Caco-2 (cell line): ENCODE measurements at regions of chr2 and their contacts with region 1.

Region 1: GRCh38 chr2:205358351-205358815 is 323.9 kb upstream of the NRP2 start:
- DNase-seq: peak in 1 of 2 experiments; percentile 59
- H3K4me3 ChIP-seq: no peak overlapping the region
- H3K4me3 Mint-ChIP-seq: peak overlapping the region; percentile 41
- H3K27ac Mint-ChIP-seq: peak overlapping the region; percentile 85
- H3K4me1 ChIP-seq: peaks cover 55% of the 10 kb centered on the region
- H3K4me1 Mint-ChIP-seq: peaks cover 50% of the 10 kb centered on the region
- H3K27me3 ChIP-seq: no peaks in the 10 kb centered on the region
- H3K27me3 Mint-ChIP-seq: no peaks in the 10 kb centered on the region
- CTCF ChIP-seq: no peak

Region 2: DNA sequence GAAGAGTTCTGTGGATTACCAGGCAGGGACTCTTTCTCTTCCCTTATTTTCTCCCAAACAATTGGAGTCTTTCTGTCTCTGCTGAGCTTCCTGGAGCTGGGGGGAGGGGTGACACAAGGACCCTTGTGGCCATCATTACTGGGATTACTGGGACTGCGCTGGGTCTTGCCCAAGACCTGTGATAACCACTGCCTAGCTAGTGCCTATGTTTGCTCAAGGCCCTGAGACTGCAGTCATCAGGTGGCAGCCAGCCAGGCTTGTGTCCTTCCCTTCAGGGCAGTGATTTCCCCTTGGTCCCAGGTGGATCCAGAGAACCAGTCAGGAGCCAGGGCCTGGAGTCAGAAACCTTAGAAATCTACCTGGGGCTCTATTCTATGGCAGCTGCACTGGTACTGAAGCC is 457.5 kb before region 1 on chr2:
- CTCF ChIA-PET with region 1: no interaction called
- POLR2A ChIA-PET with region 1: no interaction called
- intact Hi-C with region 1: loop called (anchors 2 kb)
- DNase-seq: peak; percentile 80 to 86
- H3K4me3 ChIP-seq: no peak overlapping the region
- H3K4me3 Mint-ChIP-seq: peak overlapping the region; percentile 48
- H3K27ac Mint-ChIP-seq: peak overlapping the region; percentile 77
- H3K4me1 ChIP-seq: peaks cover 26% of the 10 kb centered on the region
- H3K4me1 Mint-ChIP-seq: peaks cover 44% of the 10 kb centered on the region
- H3K27me3 ChIP-seq: no peaks in the 10 kb centered on the region
- H3K27me3 Mint-ChIP-seq: no peaks in the 10 kb centered on the region
- CTCF ChIP-seq: no peak

Region 3: DNA sequence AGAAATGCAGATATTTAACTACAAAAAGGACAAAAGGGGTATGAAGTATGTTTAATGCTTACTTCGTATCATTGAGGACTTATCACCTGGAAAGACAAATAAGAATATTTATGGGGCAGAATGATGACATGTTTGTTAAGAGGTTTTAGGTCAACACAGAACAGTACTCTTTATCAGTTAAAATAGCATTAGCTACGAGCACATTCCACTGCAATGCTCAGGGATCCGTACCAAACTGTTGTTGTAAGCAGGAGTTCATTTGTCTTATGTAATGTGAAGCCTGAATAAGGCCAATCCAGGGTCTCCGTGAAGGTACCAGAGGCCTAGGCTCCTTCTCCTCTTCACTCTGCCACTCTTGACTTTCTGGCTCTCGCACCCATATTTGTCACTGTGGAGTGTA is 141.8 kb before region 1 on chr2:
- CTCF ChIA-PET with region 1: no interaction called
- POLR2A ChIA-PET with region 1: no interaction called
- intact Hi-C with region 1: loop called (anchors 1 kb)
- DNase-seq: peak; percentile 46 to 56
- H3K4me3 ChIP-seq: no peak overlapping the region
- H3K4me3 Mint-ChIP-seq: no peak overlapping the region
- H3K27ac Mint-ChIP-seq: peak overlapping the region; percentile 78
- H3K4me1 ChIP-seq: peaks cover 57% of the 10 kb centered on the region
- H3K4me1 Mint-ChIP-seq: peaks cover 46% of the 10 kb centered on the region
- H3K27me3 ChIP-seq: no peaks in the 10 kb centered on the region
- H3K27me3 Mint-ChIP-seq: no peaks in the 10 kb centered on the region
- CTCF ChIP-seq: no peak

Region 4: GRCh38 chr2:205270689-205271088 is 87.7 kb before region 1 on chr2:
- CTCF ChIA-PET with region 1: no interaction called
- POLR2A ChIA-PET with region 1: no interaction called
- intact Hi-C with region 1: loop called (anchors 2 kb)
- DNase-seq: no peak
- H3K4me3 ChIP-seq: no peak overlapping the region
- H3K4me3 Mint-ChIP-seq: no peak overlapping the region
- H3K27ac Mint-ChIP-seq: no peak overlapping the region
- H3K4me1 ChIP-seq: peaks cover 18% of the 10 kb centered on the region
- H3K4me1 Mint-ChIP-seq: peaks cover 16% of the 10 kb centered on the region
- H3K27me3 ChIP-seq: no peaks in the 10 kb centered on the region
- H3K27me3 Mint-ChIP-seq: no peaks in the 10 kb centered on the region
- CTCF ChIP-seq: no peak

Region 5: DNA sequence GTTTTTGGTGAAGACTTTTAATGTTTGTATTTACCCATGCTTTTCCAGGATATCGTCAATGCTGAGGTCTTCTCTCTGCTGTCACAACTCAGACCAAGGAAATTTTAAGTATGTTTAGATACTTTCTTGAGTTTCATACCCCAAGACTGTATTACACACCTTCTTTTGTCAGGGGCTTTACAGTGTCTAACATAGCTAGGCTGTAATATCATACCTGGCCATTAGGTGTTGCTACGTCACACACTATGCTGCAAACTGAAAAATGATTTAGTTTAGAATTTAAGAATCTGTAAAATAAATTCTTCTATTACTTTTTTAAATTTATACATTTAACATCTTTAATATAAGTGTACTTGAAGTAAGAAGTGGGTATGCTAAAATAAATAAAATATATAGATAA is 34.5 kb before region 1 on chr2:
- CTCF ChIA-PET with region 1: no interaction called
- POLR2A ChIA-PET with region 1: no interaction called
- intact Hi-C with region 1: no loop called
- DNase-seq: no peak
- H3K4me3 ChIP-seq: no peak overlapping the region
- H3K4me3 Mint-ChIP-seq: no peak overlapping the region
- H3K27ac Mint-ChIP-seq: no peak overlapping the region
- H3K4me1 ChIP-seq: peaks cover 6% of the 10 kb centered on the region; the same call in 1 of the 2 replicates
- H3K4me1 Mint-ChIP-seq: peaks cover 14% of the 10 kb centered on the region
- H3K27me3 ChIP-seq: no peaks in the 10 kb centered on the region
- H3K27me3 Mint-ChIP-seq: no peaks in the 10 kb centered on the region
- CTCF ChIP-seq: peak; percentile 30 to 32

Region 6: DNA sequence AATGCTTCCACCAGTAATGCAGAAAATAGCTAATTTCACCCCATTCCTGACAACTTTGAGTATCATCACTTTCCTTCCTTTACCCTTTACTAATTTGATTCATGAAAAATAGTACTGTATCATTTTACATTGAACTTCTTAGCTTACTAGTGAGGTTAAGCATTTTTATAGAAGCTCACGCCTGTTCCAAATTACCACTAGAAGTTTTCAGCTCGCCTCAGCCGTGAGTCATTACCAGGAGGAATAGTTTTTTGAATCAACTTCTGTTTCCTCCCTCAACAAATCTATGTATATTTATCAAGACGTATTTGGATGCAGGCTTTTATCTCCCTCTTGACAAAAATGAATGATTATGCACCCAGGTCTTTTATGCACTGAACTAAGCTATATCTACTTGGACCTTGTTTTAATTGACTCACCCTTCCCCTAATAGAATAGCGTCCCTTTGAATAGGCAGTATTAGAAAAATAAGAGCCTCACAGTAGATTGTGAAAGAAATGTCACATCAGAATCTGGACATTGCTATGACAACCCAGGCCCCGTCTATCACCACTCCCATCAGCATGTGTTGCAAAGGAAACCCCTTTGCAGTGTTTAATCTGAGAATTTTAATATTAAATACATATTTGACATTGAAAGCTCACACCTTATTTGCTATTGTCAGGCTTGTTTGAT is 116.5 kb after region 1 on chr2:
- CTCF ChIA-PET with region 1: no interaction called
- POLR2A ChIA-PET with region 1: no interaction called
- intact Hi-C with region 1: loop called (anchors 1 kb)
- DNase-seq: no peak
- H3K4me3 ChIP-seq: no peak overlapping the region
- H3K4me3 Mint-ChIP-seq: no peak overlapping the region
- H3K27ac Mint-ChIP-seq: no peak overlapping the region
- H3K4me1 ChIP-seq: peaks cover 21% of the 10 kb centered on the region
- H3K4me1 Mint-ChIP-seq: peaks cover 14% of the 10 kb centered on the region
- H3K27me3 ChIP-seq: no peaks in the 10 kb centered on the region
- H3K27me3 Mint-ChIP-seq: no peaks in the 10 kb centered on the region
- CTCF ChIP-seq: no peak

Region 7: DNA sequence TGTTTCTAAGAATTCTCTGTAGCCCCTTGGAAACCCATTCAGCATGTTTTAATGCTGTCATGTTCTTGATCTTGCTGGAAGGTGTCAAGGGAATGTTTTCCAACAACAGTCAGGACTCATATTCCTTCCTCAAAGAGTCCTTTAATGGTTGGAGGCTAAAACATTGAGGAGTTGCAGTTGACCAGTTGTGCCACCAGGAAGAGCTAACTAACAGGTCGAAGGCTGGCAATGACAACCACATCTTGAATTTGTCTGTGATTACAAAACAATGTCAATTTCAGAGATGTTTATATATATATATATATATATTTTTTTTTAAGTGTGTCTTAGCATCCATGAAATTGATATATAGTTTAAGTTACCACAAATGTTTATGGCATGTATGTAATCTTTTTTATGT is 576.1 kb after region 1 on chr2:
- CTCF ChIA-PET with region 1: no interaction called
- POLR2A ChIA-PET with region 1: no interaction called
- intact Hi-C with region 1: loop called (anchors 10 kb)
- DNase-seq: no peak
- H3K4me3 ChIP-seq: no peak overlapping the region
- H3K4me3 Mint-ChIP-seq: peak overlapping the region; percentile 21
- H3K27ac Mint-ChIP-seq: peak overlapping the region; percentile 80
- H3K4me1 ChIP-seq: peaks cover 40% of the 10 kb centered on the region
- H3K4me1 Mint-ChIP-seq: peaks cover 47% of the 10 kb centered on the region
- H3K27me3 ChIP-seq: no peaks in the 10 kb centered on the region
- H3K27me3 Mint-ChIP-seq: no peaks in the 10 kb centered on the region
- CTCF ChIP-seq: peak in 1 of 2 experiments; percentile 18